Activated B cell treated with CpG ODN at 0.5 μM for 24 hours (primary cell): ENCODE measurements at regions of chr2 and their contacts with region 1.

Region 1: DNA sequence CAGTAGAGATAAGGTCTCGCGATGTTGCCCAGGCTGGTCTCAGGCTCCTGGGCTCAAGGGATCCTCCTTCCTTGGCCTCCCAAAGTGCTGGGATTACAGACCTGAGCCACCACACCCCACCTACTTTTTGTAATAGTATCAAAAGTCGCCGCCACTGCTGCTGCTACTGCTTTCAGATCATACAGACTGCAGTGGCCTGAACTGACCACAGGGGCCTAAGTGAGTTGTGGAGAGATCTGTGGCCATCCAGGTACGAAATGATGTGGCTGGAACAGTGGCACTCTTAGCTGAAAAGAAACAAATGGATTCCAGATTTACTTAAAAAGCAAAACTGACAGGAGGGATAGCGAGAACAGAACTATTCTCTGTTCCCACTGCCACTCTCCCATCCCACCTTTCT is 32.9 kb upstream of the POMC start:
- DNase-seq: no peak
- ATAC-seq: no peak
- H3K4me3 Mint-ChIP-seq: no peak overlapping the region
- H3K27ac Mint-ChIP-seq: no peak overlapping the region
- H3K4me1 Mint-ChIP-seq: peaks cover 24% of the 10 kb centered on the region
- H3K27me3 Mint-ChIP-seq: no peaks in the 10 kb centered on the region
- CTCF ChIP-seq: no peak

Region 2: DNA sequence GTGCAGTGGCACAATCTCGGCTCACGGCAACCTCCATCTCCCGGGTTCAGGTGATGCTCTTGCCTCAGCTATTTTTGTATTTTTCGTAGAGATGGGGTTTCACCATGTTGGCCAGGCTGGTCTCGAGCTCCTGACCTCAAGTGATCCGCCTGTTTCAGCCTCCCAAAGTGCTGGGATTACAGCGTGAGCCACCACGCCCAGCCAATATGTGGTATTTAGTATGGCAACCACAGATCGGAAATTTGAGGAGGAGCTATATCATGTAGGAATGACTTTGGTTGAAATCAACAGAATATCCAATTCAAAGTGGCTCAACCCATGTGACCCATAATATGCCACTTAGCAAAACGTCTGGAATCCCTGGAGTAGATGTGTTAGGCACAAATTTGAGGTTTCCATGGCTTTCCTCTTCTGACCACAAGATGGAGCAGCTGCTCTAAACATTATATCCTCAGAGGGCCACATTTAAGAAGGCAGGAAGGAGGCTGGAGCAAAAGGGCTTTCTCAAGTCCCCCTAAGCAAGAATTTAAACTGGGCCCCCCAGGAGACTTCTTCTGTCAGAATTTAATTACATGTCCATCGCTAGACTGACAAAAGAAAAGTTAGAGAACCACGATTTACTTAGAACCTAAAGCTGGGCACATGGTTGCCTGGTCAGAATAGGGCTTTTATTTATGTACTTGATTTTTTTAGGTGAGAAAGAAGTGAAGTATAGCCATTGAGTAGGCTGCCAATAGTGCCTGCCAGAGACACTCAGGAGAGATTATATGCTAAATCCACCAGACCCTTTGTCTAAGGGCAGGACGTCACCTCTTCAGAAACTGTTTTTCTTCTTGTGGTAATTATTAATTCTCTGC is 791.3 kb before region 1 on chr2:
- CTCF ChIA-PET with region 1: interaction called, 5 read pairs
- POLR2A ChIA-PET with region 1: no interaction called
- intact Hi-C with region 1: loop called (anchors 1 kb)
- DNase-seq: no peak
- ATAC-seq: peak; percentile 79
- H3K4me3 Mint-ChIP-seq: no peak overlapping the region
- H3K27ac Mint-ChIP-seq: no peak overlapping the region
- H3K4me1 Mint-ChIP-seq: no peaks in the 10 kb centered on the region
- H3K27me3 Mint-ChIP-seq: peaks cover 11% of the 10 kb centered on the region
- CTCF ChIP-seq: peak; percentile 86

Region 3: DNA sequence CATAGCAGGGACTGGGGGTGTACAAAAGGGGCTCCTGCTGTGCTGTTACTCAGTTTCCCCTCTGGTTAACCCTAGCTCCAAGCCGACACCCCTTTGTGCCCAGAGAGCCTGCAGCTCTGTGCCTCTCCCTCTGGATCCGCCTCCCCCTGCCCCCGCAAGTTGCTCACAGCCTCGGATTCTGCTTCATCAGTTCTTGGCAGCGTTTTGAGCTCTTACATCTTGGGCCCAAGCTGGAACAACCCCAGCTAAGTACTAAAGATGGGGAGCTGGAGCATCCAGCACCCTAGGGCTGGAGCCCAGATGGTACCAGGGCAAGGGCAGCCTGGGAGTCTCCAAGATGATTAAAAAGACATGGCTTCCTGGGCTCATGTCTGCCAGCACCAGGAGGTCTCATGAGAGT is 73.6 kb before region 1 on chr2:
- CTCF ChIA-PET with region 1: interaction called, 6 read pairs
- POLR2A ChIA-PET with region 1: no interaction called
- intact Hi-C with region 1: loop called (anchors 1 kb)
- DNase-seq: no peak
- ATAC-seq: no peak
- H3K4me3 Mint-ChIP-seq: no peak overlapping the region
- H3K27ac Mint-ChIP-seq: no peak overlapping the region
- H3K4me1 Mint-ChIP-seq: peaks cover 15% of the 10 kb centered on the region
- H3K27me3 Mint-ChIP-seq: peaks cover 19% of the 10 kb centered on the region
- CTCF ChIP-seq: no peak

Region 4: DNA sequence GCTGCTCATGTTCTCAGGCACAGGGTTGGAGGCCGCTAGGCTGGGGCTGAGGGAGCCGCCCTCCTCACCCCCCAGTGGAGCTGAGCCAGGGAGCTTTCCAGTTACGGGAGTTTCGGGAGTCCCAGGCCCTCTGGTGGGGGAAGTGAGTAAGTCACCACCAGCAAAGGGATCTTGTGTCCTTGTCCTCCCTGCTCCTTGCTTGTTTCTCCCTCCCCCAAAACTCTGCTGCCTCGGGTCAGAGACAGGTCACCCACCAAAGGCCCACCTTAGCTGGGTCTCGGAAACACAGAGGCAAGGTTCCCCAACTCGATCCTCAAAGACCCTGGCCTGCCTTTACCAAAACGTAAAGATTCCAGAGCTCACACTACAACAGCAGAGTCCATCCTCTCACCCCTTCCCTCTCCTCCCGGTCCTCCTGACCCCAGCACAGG is 27.6 kb after region 1 on chr2:
- CTCF ChIA-PET with region 1: interaction called, 9 read pairs
- POLR2A ChIA-PET with region 1: no interaction called
- intact Hi-C with region 1: loop called (anchors 2 kb)
- DNase-seq: no peak
- ATAC-seq: peak; percentile 59
- H3K4me3 Mint-ChIP-seq: no peak overlapping the region
- H3K27ac Mint-ChIP-seq: no peak overlapping the region
- H3K4me1 Mint-ChIP-seq: peaks cover 18% of the 10 kb centered on the region
- H3K27me3 Mint-ChIP-seq: no peaks in the 10 kb centered on the region
- CTCF ChIP-seq: no peak

Region 5: DNA sequence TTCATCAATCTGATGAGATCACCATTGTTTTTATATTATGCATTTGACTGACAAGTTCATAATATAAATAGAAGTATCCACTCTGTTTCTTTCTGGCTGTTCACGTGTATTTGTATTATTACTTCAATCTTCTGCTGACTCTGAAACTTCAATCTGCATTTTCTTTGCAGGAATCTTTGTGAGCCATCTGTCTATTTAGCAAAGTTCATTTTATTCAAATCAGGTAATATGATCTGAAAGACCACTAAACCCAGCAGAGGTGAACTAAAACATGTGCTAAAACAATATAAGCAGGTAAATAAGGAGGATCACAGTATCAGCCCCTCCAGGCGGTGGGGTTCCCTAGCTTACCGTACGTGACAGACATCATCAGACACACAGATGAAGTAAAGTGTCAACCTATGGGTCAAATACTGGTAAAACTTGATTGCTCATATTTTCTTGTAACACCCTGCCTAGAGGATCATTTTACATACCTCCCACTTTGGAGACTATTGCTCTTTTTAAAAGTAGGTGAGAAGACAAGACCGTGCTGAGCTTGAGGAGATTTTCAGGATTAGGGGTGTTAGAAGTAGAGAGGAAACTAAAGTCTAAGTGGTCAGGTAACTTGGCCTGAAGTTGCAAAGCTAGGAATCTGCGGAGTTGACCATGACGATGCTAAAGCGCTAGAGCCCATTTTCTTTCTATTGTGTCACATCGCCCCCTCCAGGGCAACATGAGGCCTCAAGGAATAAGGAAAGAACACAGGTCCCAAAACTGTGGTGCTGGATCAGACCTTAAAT is 463.1 kb after region 1 on chr2:
- CTCF ChIA-PET with region 1: no interaction called
- POLR2A ChIA-PET with region 1: no interaction called
- intact Hi-C with region 1: loop called (anchors 1 kb)
- DNase-seq: no peak
- ATAC-seq: peak; percentile 42
- H3K4me3 Mint-ChIP-seq: peak overlapping the region; percentile 20
- H3K27ac Mint-ChIP-seq: no peak overlapping the region
- H3K4me1 Mint-ChIP-seq: peaks cover 7% of the 10 kb centered on the region
- H3K27me3 Mint-ChIP-seq: no peaks in the 10 kb centered on the region
- CTCF ChIP-seq: no peak